Brain microvascular endothelial cell (primary cell): ENCODE measurements at regions of chr10 and their contacts with region 1.

Region 1: DNA sequence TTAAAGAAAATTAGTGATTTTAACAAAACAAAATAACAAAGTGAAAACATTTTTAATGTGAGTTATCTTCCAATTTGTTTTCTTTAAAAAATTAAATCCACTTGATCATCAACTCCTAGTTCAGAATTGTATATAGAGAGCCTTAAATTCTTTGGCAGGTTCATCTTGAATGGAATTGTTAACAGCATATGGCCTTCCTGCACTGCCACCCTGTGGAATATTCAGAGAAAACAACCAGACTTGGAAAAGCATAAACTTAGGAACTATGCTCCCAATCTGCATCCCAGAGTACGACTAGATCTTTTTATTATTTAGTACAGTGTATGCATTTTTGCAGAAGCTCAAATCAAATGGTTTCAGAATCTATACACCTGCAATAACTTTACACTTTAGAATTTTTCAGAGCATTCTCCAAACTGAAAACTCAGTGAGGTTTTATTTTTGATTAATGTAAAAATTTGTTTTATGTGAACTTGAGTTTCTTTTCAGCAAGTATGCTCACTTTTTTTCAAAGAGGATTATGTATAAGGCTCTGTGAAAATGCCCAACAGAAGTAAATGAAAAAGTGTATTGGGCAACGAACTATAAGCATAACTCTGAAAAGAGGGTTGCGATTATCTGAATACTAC is 44.9 kb upstream of the ANK3 start:
- DNase-seq: peak; percentile 58
- H3K4me3 ChIP-seq: no peak overlapping the region
- H3K27ac ChIP-seq: no peak overlapping the region
- H3K27me3 ChIP-seq: no peaks in the 10 kb centered on the region
- CTCF ChIP-seq: peak; percentile 63

Region 2: GRCh38 chr10:60114765-60115586 is 319.6 kb before region 1 on chr10:
- in situ Hi-C with region 1: loop called (anchors 25 kb)
- DNase-seq: peak; percentile 55
- H3K4me3 ChIP-seq: no peak overlapping the region
- H3K27ac ChIP-seq: no peak overlapping the region
- H3K27me3 ChIP-seq: no peaks in the 10 kb centered on the region
- CTCF ChIP-seq: peak; percentile 68

Region 3: GRCh38 chr10:60208676-60209269 is 225.8 kb before region 1 on chr10:
- in situ Hi-C with region 1: loop called (anchors 25 kb)
- DNase-seq: no peak
- H3K4me3 ChIP-seq: no peak overlapping the region
- H3K27ac ChIP-seq: no peak overlapping the region
- H3K27me3 ChIP-seq: no peaks in the 10 kb centered on the region
- CTCF ChIP-seq: peak; percentile 73

Region 4: DNA sequence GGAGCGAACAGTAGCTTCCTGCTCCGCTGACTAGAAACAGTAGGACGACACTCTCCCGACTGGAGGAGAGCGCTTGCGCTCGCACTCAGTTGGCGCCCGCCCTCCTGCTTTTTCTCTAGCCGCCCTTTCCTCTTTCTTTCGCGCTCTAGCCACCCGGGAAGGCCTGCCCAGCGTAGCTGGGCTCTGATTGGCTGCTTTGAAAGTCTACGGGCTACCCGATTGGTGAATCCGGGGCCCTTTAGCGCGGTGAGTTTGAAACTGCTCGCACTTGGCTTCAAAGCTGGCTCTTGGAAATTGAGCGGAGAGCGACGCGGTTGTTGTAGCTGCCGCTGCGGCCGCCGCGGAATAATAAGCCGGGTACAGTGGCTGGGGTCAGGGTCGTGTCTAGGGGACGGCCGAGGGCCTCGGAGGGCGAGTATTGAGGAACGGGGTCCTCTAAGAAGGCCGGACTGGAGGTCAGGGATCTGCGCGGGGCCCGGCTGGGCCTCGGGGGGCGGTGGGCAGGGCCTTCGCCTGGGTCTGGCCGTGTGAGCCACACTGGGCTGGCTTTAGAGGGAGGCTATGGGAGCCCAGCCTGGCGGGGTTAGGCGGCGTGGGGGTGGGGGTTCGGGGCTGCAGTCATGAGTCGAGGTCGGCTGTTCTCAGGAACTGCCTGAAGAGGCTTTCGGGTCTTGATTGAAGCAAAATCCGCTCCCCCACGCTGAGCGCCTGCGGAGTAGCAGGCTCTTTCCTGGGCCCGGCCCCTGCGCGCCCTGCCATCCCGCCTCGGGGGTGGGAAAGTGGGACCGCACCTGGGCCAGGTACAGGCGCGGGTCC is 343.9 kb after region 1 on chr10 and contains the start of gene CDK1:
- in situ Hi-C with region 1: no loop called
- DNase-seq: peak; percentile 99
- H3K4me3 ChIP-seq: peak within 1 kb of the TSS; percentile 80
- H3K27ac ChIP-seq: peak within 1 kb of the TSS; percentile 53
- H3K27me3 ChIP-seq: no peaks in the 10 kb centered on the region
- CTCF ChIP-seq: no peak

Region 5: DNA sequence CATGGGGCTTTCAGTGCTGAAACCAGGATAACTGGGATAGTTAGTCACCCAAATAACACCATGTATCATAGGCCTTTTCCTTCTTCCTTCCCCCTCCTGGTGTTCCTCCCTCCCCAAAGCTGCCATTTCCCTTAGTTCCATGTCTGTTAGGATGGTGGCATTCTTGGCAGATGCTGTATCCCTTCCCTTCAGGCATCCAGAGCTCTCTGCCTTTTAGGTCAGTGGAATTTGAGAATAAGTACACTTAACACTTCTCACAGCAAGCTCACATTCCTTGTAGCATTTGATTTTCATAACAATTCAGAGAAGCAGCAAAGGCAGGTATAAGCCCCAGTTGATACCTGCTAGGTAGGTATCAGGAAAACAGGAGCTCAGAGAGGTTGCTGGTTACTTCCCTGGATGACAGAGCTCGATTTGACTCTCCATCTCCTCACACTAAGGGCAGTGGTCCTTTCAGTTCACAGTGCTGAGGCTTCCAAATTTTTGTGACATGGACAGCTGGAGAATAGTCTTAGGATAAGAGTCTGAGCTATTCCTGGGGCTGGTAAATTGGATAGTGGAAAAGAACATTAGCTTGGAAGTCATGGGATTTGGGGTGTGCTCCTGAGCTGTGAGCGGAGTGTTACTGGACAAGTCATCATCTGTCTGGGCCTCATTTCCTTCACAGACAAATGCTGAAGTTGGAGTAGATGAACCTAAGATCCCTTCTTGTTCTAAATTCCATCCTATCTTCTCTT is 618.1 kb after region 1 on chr10:
- in situ Hi-C with region 1: no loop called
- DNase-seq: no peak
- H3K4me3 ChIP-seq: no peak overlapping the region
- H3K27ac ChIP-seq: no peak overlapping the region
- H3K27me3 ChIP-seq: no peaks in the 10 kb centered on the region
- CTCF ChIP-seq: no peak